ENCODE measurements at regions of chr1 and their contacts with region 1.

Region 1: DNA sequence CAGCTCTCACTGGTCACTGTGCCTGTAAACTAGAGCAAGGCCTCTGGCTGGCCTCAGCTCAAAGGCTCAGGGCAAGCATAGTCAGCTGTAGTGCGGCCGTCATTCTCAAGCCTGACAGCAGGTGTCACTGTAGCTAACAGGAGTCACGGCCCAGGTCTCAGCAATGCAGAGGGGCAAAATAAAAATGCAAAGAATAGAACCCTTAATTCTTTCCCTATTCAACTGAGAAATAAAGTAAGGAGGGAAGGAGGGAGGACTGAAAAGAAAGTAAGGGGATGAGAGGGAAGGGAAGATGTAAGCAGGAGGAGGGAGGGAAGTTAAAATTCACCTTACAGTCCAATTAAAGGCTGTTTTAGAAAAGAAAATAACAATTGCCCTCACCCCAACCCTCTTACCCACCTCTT is 106.1 kb downstream of the KIAA0319L start:
- DNase-seq: peak; percentile 70
- ATAC-seq: peak; percentile 84
- H3K4me3 ChIP-seq: no peak overlapping the region
- H3K4me3 Mint-ChIP-seq: no peak overlapping the region
- H3K27ac ChIP-seq: no peak overlapping the region
- H3K27ac Mint-ChIP-seq: peak overlapping the region; percentile 23
- H3K4me1 ChIP-seq: no peaks in the 10 kb centered on the region
- H3K4me1 Mint-ChIP-seq: no peaks in the 10 kb centered on the region
- H3K27me3 ChIP-seq: no peaks in the 10 kb centered on the region
- H3K27me3 Mint-ChIP-seq: no peaks in the 10 kb centered on the region
- CTCF ChIP-seq: peak; percentile 82

Region 2: GRCh38 chr1:35470977-35471613 is 20.0 kb after region 1 on chr1:
- CTCF ChIA-PET with region 1: interaction called, 10 read pairs
- POLR2A ChIA-PET with region 1: no interaction called
- intact Hi-C with region 1: no loop called
- DNase-seq: no peak
- ATAC-seq: no peak
- H3K4me3 ChIP-seq: no peak overlapping the region
- H3K4me3 Mint-ChIP-seq: no peak overlapping the region
- H3K27ac ChIP-seq: no peak overlapping the region
- H3K27ac Mint-ChIP-seq: no peak overlapping the region
- H3K4me1 ChIP-seq: no peaks in the 10 kb centered on the region
- H3K4me1 Mint-ChIP-seq: no peaks in the 10 kb centered on the region
- H3K27me3 ChIP-seq: no peaks in the 10 kb centered on the region
- H3K27me3 Mint-ChIP-seq: no peaks in the 10 kb centered on the region
- CTCF ChIP-seq: no peak

Region 3: DNA sequence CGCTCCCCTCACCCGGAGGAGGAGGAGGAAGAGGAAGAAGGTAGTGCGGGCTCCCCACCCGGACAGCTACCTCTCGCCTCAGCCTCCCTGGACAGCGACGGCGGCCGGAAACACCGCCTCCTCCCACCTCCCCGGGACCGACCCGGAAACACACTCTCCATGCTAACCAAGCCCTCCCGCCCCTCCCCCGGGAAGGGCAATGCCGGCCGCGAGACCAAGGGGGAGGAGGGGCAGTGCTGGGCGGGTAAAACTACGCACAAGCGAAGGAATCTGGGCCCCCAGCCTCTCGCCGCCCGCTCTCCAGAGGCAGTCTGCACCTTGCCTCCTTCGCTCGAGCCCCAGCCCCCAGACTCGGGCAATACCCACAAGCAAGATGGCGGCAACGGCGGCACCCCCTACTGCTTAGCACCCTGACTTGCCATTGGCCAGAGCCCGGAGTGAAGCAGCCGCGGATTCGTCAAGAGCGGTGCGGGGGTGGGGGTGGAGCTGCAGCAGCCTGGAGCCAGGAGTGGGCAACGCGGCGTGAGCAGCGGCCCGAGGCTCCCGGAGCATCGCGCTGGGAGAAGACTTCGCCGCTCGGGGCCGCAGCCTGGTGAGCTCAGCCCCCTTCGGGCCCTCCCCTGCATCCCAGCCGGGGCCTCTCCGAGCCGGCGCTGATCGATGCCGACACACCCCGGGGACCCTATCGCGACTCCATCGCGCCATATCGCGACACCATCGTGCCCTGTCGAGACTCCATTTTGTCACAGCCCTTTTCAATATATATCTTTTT is 106.4 kb after region 1 on chr1 and contains the starts of genes KIAA0319L and NCDN:
- CTCF ChIA-PET with region 1: interaction called, 30 read pairs
- POLR2A ChIA-PET with region 1: interaction called, 3 read pairs
- intact Hi-C with region 1: no loop called
- DNase-seq: peak; percentile 96
- ATAC-seq: peak; percentile 92
- H3K4me3 ChIP-seq: peak within 1 kb of the TSS; percentile 82 to 94 (median 90)
- H3K4me3 Mint-ChIP-seq: peak within 1 kb of the TSS; percentile 98
- H3K27ac ChIP-seq: peak within 1 kb of the TSS; percentile 68 to 82
- H3K27ac Mint-ChIP-seq: peak within 1 kb of the TSS; percentile 99
- H3K4me1 ChIP-seq: peaks cover 15 to 26% of the 10 kb centered on the region in 2 donors
- H3K4me1 Mint-ChIP-seq: peaks cover 41% of the 10 kb centered on the region
- H3K27me3 ChIP-seq: no peaks in the 10 kb centered on the region
- H3K27me3 Mint-ChIP-seq: no peaks in the 10 kb centered on the region
- CTCF ChIP-seq: no peak
- total RNA-seq, gene KIAA0319L: 78.1 and 89.9 TPM in 2 replicates
- total RNA-seq, gene NCDN: 19.8 and 22.6 TPM in 2 replicates

Region 4: GRCh38 chr1:35715568-35716002 is 264.5 kb after region 1 on chr1:
- CTCF ChIA-PET with region 1: interaction called, 40 read pairs
- POLR2A ChIA-PET with region 1: no interaction called
- intact Hi-C with region 1: no loop called
- DNase-seq: peak; percentile 79
- ATAC-seq: peak; percentile 59
- H3K4me3 ChIP-seq: no peak overlapping the region
- H3K4me3 Mint-ChIP-seq: peak overlapping the region; percentile 51
- H3K27ac ChIP-seq: no peak overlapping the region
- H3K27ac Mint-ChIP-seq: peak overlapping the region; percentile 54
- H3K4me1 ChIP-seq: peaks cover 10 to 20% of the 10 kb centered on the region in 2 donors
- H3K4me1 Mint-ChIP-seq: peaks cover 29% of the 10 kb centered on the region
- H3K27me3 ChIP-seq: peaks cover 0 to 3% (median 0%) of the 10 kb centered on the region in 4 experiments
- H3K27me3 Mint-ChIP-seq: no peaks in the 10 kb centered on the region
- CTCF ChIP-seq: peak; percentile 98

Region 5: DNA sequence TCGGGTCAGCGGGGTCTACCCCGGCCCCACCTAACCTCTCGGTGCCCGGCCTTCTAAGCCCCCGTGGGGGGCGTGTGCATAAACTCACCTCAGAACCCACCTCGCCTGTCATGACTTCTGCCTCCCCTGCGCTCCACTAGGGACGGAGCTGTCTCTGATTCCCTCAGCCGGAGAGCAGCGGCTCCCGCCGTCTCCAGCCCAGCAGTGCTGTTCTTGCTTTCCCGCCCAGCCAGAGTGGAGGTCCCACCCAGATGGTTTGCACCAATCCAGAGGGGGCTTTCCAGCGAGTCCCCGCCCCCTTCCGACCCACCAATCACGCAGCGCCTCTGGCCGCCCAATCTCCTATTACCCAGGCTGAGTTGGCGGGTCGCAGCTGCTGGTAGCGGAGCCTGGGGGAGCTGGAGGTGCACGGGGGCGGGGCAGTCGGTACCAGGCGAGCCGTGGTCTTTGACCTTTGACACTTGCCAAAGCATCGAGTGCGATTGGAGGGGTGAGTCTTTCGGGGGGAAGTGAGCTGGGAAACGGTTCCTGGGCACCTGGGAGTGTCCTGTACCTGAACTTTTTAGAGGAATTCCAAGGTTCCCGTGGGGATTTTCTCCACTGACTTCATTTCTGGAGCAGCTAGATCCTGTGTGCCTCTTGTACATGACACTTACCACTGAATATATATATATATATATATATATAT is 318.8 kb after region 1 on chr1 and contains the start of gene CLSPN:
- CTCF ChIA-PET with region 1: interaction called, 60 read pairs
- POLR2A ChIA-PET with region 1: no interaction called
- intact Hi-C with region 1: loop called (anchors 1 kb)
- DNase-seq: peak; percentile 94
- ATAC-seq: peak; percentile 95
- H3K4me3 ChIP-seq: peak within 1 kb of the TSS; percentile 75 to 99 (median 87)
- H3K4me3 Mint-ChIP-seq: peak within 1 kb of the TSS; percentile 97
- H3K27ac ChIP-seq: peak within 1 kb of the TSS; percentile 51 to 83
- H3K27ac Mint-ChIP-seq: peak within 1 kb of the TSS; percentile 86
- H3K4me1 ChIP-seq: peaks cover 0 to 12% of the 10 kb centered on the region in 2 donors
- H3K4me1 Mint-ChIP-seq: peaks cover 10% of the 10 kb centered on the region
- H3K27me3 ChIP-seq: no peaks in the 10 kb centered on the region
- H3K27me3 Mint-ChIP-seq: no peaks in the 10 kb centered on the region
- CTCF ChIP-seq: no peak
- total RNA-seq, gene CLSPN: 0.85 and 1.1 TPM in 2 replicates